Transverse colon (tissue), 4 donors: ENCODE measurements at regions of chr13 and their contacts with region 1.

Region 1: DNA sequence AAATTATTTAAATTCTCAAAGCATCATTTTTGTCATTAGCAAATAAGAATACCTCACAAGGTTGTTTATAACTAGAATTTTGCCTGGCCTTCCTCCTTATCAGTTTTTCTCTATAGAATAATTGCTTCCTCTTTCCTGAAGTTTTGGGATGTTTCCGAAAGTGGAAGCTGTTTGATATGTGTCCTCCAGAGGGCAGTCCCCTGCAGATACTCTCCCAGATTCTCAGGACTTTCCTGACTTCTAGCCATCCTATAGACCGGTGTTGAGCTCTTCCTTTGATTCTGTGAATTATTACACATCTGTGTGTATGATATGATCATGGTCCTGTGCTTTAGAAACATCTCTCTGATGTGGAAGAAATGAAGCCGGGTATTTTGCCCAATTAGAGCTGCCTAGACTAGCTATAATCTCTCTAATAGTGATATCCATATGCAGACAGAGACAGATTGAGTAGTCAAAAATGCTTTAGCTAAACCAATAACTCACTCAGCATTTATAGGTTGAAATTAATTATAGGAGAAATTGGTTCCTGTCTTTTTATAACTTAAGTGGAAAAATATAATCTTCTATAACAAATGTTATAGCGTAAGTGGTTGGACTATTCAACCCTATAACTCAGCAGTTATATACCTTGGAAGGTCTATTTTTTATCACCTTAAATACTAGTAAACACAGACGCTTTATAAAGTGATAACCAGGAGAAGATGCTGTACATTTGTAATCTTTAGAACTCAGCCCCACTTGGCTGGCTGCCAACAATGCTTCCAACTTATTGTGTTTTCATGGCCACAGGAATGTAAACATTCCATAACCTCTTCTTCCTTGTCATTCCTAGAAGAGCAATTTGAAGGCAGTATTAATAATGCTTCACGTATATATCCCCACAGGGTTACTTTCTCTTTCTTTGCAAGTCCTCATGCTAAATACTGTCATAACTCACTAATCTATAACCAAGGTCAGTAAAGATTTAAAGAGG is 201.0 kb upstream of the RXFP2 start:
- DNase-seq: peak; percentile 13
- H3K4me3 ChIP-seq: no peak overlapping the region
- H3K27ac ChIP-seq: no peak overlapping the region
- H3K4me1 ChIP-seq: no peaks in the 10 kb centered on the region
- H3K27me3 ChIP-seq: no peaks in the 10 kb centered on the region
- CTCF ChIP-seq: peak; percentile 38 to 57 (median 46)
- EP300 ChIP-seq: no peak
- POLR2A ChIP-seq: no peak

Region 2: GRCh38 chr13:31029102-31029501 is 509.3 kb before region 1 on chr13:
- in situ Hi-C with region 1: no loop called
- intact Hi-C with region 1: loop called (anchors 10 kb)
- DNase-seq: no peak
- H3K4me3 ChIP-seq: no peak overlapping the region
- H3K27ac ChIP-seq: no peak overlapping the region
- H3K4me1 ChIP-seq: no peaks in the 10 kb centered on the region
- H3K27me3 ChIP-seq: no peaks in the 10 kb centered on the region
- CTCF ChIP-seq: no peak
- EP300 ChIP-seq: no peak
- POLR2A ChIP-seq: no peak